Activated CD8-positive, alpha-beta T cell treated with anti-CD3 and anti-CD28 coated beads for 36 hours (primary cell): ENCODE measurements at regions of chr22 and their contacts with region 1.

Region 1: GRCh38 chr22:21098099-21098671 is 52.4 kb downstream of the LRRC74B start:
- DNase-seq: peak; percentile 37
- ATAC-seq: no peak
- H3K4me3 Mint-ChIP-seq: no peak overlapping the region
- H3K27ac Mint-ChIP-seq: no peak overlapping the region
- H3K4me1 Mint-ChIP-seq: peaks cover 9% of the 10 kb centered on the region
- H3K27me3 Mint-ChIP-seq: peaks cover 11% of the 10 kb centered on the region
- CTCF ChIP-seq: no peak

Region 2: GRCh38 chr22:20904008-20904979 is 193.9 kb before region 1 on chr22:
- CTCF ChIA-PET with region 1: no interaction called
- POLR2A ChIA-PET with region 1: no interaction called
- intact Hi-C with region 1: loop called (anchors 10 kb)
- DNase-seq: no peak
- ATAC-seq: no peak
- H3K4me3 Mint-ChIP-seq: no peak overlapping the region
- H3K27ac Mint-ChIP-seq: no peak overlapping the region
- H3K4me1 Mint-ChIP-seq: no peaks in the 10 kb centered on the region
- H3K27me3 Mint-ChIP-seq: no peaks in the 10 kb centered on the region
- CTCF ChIP-seq: no peak

Region 3: GRCh38 chr22:21045585-21046294 is 52.4 kb before region 1 on chr22 and contains the start of gene LRRC74B:
- CTCF ChIA-PET with region 1: interaction called, 3 read pairs
- POLR2A ChIA-PET with region 1: no interaction called
- intact Hi-C with region 1: loop called (anchors 10 kb)
- DNase-seq: peak; percentile 83
- ATAC-seq: peak; percentile 98
- H3K4me3 Mint-ChIP-seq: peak within 1 kb of the TSS; percentile 47
- H3K27ac Mint-ChIP-seq: peak within 1 kb of the TSS; percentile 66
- H3K4me1 Mint-ChIP-seq: peaks cover 15% of the 10 kb centered on the region
- H3K27me3 Mint-ChIP-seq: peaks cover 19% of the 10 kb centered on the region
- CTCF ChIP-seq: no peak
- total RNA-seq, gene LRRC74B: not detected

Region 4: GRCh38 chr22:21108402-21109115 is 10.4 kb after region 1 on chr22:
- CTCF ChIA-PET with region 1: interaction called, 10 read pairs
- POLR2A ChIA-PET with region 1: no interaction called
- intact Hi-C with region 1: no loop called
- DNase-seq: no peak
- ATAC-seq: no peak
- H3K4me3 Mint-ChIP-seq: no peak overlapping the region
- H3K27ac Mint-ChIP-seq: no peak overlapping the region
- H3K4me1 Mint-ChIP-seq: no peaks in the 10 kb centered on the region
- H3K27me3 Mint-ChIP-seq: peaks cover 13% of the 10 kb centered on the region
- CTCF ChIP-seq: no peak